Gastrocnemius medialis (tissue), 4 donors: ENCODE measurements at regions of chr12 and their contacts with region 1.

Region 1: DNA sequence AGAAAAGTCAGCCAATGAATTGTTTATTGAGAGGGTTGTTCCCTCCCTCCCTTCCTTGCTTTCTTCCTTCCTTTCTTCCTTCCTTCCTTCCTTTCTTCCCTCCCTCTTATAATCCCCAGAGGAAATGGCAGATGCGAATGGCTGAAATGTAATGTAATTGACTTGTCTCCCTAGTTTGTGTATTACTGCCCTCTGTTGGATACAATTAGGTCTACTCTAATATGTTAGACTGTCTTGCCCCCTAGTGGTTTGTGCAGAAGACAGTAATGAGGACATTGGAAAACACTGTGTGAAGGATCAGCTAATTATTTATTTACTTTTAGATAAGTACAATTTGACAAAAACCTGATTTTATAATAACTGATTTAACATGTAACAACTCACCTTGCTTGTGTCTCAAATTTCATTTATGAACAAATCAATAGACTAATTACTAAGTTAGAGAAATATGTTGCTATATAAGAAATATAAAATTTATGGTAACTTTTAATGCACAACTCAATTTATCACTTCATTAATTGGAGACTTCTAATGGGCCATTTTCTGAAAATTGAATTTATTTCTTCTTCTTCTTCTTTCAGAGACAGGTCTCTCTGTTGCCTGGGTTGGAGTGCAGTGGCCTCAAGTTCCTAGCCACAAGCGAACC is 229.8 kb upstream of the LRIG3 start:
- DNase-seq: no peak
- ATAC-seq: peak; percentile 91 to 95
- H3K4me3 ChIP-seq: no peak overlapping the region
- H3K27ac ChIP-seq: no peak overlapping the region
- H3K4me1 ChIP-seq: peaks cover 0 to 2% of the 10 kb centered on the region in 2 donors
- H3K27me3 ChIP-seq: no peaks in the 10 kb centered on the region
- CTCF ChIP-seq: peak; percentile 67 to 92 (median 85)
- POLR2A ChIP-seq: no peak

Region 2: DNA sequence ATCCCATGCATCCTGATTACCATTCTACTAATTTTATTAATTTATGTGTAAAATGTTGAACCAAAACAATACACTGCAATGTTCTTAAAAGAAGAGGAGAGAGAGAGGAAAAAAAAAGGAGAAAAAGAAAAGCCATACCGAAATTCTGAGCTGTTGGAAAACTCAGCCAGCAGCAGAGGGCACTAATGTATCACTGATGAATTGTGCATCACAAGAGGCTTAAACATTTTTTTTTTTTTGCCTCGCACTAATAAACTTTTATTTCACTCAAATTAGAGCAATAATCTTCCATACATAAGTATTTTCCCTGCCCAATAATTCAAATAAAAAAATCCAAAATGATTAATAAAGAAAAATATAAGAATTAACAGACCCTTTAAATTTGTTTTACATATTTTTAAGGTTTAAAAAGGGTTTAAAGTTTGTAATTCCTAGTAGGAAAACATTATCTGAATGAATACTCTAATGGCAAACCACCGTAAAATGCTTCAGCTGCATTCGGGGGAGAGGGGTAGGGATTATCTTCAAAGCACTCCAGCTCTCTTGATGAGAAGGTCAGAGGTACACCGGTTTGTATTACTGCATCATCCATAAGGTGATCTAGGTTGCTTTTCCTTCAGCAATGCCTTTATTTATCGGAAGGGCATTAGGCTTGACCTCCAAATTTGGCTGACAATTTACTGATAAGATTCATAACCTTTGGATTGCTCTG is 1166.8 kb before region 1 on chr12:
- in situ Hi-C with region 1: loop called (anchors 25 kb)
- intact Hi-C with region 1: no loop called
- DNase-seq: no peak
- ATAC-seq: no peak
- H3K4me3 ChIP-seq: no peak overlapping the region
- H3K27ac ChIP-seq: no peak overlapping the region
- H3K4me1 ChIP-seq: no peaks in the 10 kb centered on the region
- H3K27me3 ChIP-seq: no peaks in the 10 kb centered on the region
- CTCF ChIP-seq: peak in 4 of 5 experiments; percentile 38 to 62 (median 48)
- POLR2A ChIP-seq: no peak

Region 3: GRCh38 chr12:58540480-58541299 is 609.4 kb before region 1 on chr12:
- in situ Hi-C with region 1: loop called (anchors 5 to 25 kb)
- intact Hi-C with region 1: loop called (anchors 1 kb)
- DNase-seq: peak; percentile 14 to 58
- ATAC-seq: peak; percentile 52 to 88
- H3K4me3 ChIP-seq: no peak overlapping the region
- H3K27ac ChIP-seq: no peak overlapping the region
- H3K4me1 ChIP-seq: no peaks in the 10 kb centered on the region
- H3K27me3 ChIP-seq: no peaks in the 10 kb centered on the region
- CTCF ChIP-seq: peak; percentile 42 to 77 (median 55)
- POLR2A ChIP-seq: no peak

Region 4: DNA sequence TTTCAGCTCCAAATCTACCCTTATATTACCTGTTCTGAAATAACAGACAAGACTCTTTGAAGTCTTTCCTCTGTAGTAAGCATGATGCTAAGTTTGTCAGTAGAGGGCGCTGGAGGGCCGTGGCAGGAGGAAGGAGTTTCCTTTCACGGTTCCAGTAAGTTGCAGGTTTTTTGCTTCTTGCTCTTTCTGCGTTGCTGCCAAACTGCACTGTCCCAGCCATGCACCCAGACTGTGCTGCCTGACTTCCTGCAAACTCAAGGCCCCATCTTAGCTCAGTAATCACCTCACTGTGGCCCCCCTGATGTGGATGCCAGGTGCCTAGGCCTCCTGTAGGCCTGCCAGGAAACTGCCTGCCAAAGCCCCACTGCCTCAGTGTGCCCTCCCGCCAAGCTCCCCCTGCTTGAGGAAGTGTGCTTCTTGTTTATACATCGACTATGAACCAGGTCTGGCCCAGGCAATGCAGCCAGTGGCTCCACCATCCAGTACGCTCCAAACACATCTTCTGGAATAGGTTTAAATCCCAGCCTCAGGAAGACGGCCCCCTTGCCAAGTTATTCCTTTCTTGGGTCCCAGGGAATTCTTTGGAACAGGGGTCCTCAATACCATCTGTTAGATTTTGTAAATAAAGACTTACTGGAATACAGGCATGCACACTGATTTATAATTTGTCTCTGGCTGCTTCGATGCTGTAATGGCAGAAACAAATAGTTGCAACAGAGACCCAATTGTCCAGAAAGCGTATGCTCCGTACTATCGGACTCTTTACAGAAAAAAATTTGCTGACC is 36.1 kb before region 1 on chr12:
- in situ Hi-C with region 1: no loop called
- intact Hi-C with region 1: loop called (anchors 5 kb)
- DNase-seq: peak; percentile 6 to 26
- ATAC-seq: peak in 1 of 2 donors; percentile 44
- H3K4me3 ChIP-seq: no peak overlapping the region
- H3K27ac ChIP-seq: no peak overlapping the region
- H3K4me1 ChIP-seq: no peaks in the 10 kb centered on the region
- H3K27me3 ChIP-seq: no peaks in the 10 kb centered on the region
- CTCF ChIP-seq: peak in 4 of 5 experiments; percentile 27 to 70 (median 58)
- POLR2A ChIP-seq: no peak